Natural killer cell (primary cell): ENCODE measurements at regions of chr2 and their contacts with region 1.

Region 1: GRCh38 chr2:64644177-64645004 is 9.3 kb downstream of the SERTAD2 start:
- DNase-seq: peak; percentile 64 to 70
- ATAC-seq: peak; percentile 66 to 83 (median 68)
- H3K4me3 ChIP-seq: peak overlapping the region; percentile 23
- H3K4me3 Mint-ChIP-seq: peak overlapping the region; percentile 96
- H3K27ac ChIP-seq: peak overlapping the region; percentile 93
- H3K27ac Mint-ChIP-seq: peak overlapping the region; percentile 98 to 99
- H3K4me1 ChIP-seq: peaks cover 53% of the 10 kb centered on the region
- H3K4me1 Mint-ChIP-seq: peaks cover 59 to 67% of the 10 kb centered on the region in 2 donors
- H3K27me3 ChIP-seq: no peaks in the 10 kb centered on the region
- H3K27me3 Mint-ChIP-seq: no peaks in the 10 kb centered on the region
- CTCF ChIP-seq: no peak

Region 2: GRCh38 chr2:64609227-64609941 is 35.0 kb before region 1 on chr2:
- intact Hi-C with region 1: loop called (anchors 2 kb)
- DNase-seq: peak; percentile 80 to 86
- ATAC-seq: peak; percentile 75 to 86 (median 77)
- H3K4me3 ChIP-seq: peak overlapping the region; percentile 60
- H3K4me3 Mint-ChIP-seq: peak overlapping the region; percentile 85
- H3K27ac ChIP-seq: peak overlapping the region; percentile 69
- H3K27ac Mint-ChIP-seq: peak overlapping the region; percentile 77 to 89
- H3K4me1 ChIP-seq: peaks cover 35% of the 10 kb centered on the region
- H3K4me1 Mint-ChIP-seq: peaks cover 19 to 28% of the 10 kb centered on the region in 2 donors
- H3K27me3 ChIP-seq: no peaks in the 10 kb centered on the region
- H3K27me3 Mint-ChIP-seq: no peaks in the 10 kb centered on the region
- CTCF ChIP-seq: peak; percentile 34

Region 3: DNA sequence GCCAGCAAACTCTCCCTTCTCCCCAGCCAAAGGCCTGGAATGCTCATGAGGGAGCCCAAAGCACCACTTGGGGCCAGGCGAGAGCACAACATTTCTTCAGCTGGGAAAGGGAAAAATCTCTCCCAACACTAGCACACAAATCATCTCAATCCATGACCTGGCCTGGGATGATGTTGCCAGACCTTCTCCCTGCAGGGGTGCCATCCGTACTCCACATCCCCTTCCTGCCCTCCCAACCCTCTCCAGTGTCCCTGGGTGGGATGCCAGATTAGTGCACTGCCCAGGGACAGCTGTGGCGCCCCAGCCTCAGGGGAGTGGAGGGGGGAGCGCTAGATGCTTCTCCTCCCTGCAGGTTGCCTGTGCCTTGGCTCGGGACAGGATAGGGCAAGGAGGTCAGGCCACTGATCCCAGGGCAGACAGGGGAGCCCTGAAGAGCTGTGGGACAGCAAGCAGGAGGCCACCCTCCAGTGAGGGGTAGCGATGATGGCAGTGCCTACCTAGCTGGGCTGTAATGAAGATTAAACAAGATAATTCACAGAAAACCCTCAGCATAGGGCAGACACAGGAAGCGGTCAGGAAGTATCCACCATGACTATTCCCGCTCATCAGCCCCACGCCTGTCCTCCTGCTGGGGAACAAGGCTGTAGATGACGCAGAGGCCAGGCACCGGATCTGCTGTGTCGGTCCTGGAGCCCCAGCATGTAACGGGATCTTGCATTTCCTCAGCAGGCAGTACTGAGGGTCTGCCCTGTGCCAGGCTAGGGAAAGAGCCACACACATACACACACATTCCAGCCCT is 21.7 kb before region 1 on chr2:
- intact Hi-C with region 1: no loop called
- DNase-seq: no peak
- ATAC-seq: no peak
- H3K4me3 ChIP-seq: no peak overlapping the region
- H3K4me3 Mint-ChIP-seq: no peak overlapping the region
- H3K27ac ChIP-seq: no peak overlapping the region
- H3K27ac Mint-ChIP-seq: no peak overlapping the region
- H3K4me1 ChIP-seq: no peaks in the 10 kb centered on the region
- H3K4me1 Mint-ChIP-seq: peaks cover 0 to 9% of the 10 kb centered on the region in 2 donors
- H3K27me3 ChIP-seq: no peaks in the 10 kb centered on the region
- H3K27me3 Mint-ChIP-seq: peaks cover 0 to 5% of the 10 kb centered on the region in 2 donors
- CTCF ChIP-seq: no peak

Region 4: DNA sequence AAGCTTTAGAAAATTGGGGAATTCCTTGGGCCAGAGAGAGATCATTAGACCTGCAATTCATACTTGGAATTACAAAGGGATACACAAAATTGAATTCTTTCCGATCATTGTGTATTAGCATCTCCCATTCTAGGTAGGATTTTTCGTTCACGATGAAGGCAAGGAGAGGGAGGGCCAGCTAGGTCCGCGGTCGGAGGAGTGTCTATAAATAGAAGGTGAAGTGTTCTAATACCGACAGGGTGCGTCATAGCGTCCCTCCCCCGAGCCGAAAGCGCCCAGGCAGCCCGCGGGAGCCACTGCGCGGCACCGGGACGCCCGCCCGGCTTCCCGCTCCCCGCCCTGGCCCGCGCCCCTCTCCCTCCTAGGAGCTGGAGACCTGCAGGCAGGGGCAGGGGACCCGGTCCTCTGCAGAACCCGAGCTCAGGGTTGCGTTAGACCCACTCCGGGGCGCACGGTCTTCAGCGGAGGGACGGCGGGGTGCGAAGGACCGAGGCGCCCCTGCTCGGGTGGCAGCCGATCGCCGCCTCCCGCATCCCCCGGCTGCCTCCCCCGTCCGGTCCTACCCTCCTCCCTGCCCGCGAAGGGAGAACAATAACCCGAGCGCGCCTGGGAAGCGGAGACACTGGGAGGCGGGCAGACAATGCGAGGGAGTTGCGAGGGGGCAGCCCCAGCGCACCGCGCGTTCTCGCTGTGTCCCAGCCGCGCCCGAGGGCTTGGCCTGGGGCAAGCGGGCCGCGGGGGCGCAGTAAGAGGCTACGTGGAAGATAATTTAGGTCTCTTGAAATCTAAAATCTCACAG is 123.5 kb after region 1 on chr2:
- intact Hi-C with region 1: loop called (anchors 1 kb)
- DNase-seq: peak; percentile 77 to 87
- ATAC-seq: peak; percentile 85 to 92 (median 92)
- H3K4me3 ChIP-seq: peak overlapping the region; percentile 76
- H3K4me3 Mint-ChIP-seq: peak overlapping the region; percentile 96
- H3K27ac ChIP-seq: peak overlapping the region; percentile 95
- H3K27ac Mint-ChIP-seq: peak overlapping the region; percentile 88 to 96
- H3K4me1 ChIP-seq: peaks cover 4% of the 10 kb centered on the region
- H3K4me1 Mint-ChIP-seq: peaks cover 20 to 29% of the 10 kb centered on the region in 2 donors
- H3K27me3 ChIP-seq: no peaks in the 10 kb centered on the region
- H3K27me3 Mint-ChIP-seq: peaks cover 4 to 13% of the 10 kb centered on the region in 2 donors
- CTCF ChIP-seq: no peak

Region 5: DNA sequence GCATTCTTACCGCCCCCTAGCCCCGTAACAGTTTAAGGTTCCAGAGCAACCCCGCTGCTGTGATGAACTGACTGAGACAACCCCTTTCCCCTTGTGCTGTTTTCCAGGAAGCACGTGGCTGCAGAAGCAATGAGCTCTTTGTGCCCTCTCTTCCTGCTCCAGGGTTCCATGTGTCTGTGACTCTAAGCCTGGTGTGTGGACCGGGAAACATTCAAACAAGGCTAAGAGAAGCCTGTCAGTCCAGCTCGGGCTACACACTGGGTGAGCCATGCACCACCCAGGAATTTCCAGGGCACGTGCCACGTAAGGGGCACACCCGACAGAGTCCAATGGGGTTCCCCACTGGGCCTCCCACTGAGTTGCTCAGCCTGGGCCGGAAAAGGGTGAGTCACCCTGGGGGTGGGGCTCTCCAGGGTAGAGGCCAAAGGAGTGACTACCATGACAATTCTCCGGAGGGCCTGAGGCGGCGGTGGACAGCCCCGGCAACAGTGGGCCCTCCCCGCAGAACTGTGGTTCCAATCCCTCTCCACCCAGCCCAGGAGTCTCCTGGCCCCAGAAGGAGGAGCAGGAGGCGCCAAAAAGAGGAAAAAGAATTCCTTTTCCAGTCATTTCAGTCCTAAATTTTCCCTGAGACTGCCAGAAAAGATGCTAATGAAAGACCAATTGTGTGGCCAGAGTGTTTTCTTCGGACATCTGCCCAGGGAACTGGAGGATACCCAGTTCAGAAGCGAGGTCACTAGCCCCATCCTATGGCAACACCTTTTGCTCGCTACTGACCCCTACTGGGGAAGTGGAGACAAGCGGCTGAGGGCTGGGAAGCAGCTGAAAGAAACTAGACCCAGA is 187.0 kb after region 1 on chr2:
- intact Hi-C with region 1: loop called (anchors 1 kb)
- DNase-seq: peak; percentile 70 to 89
- ATAC-seq: peak; percentile 88 to 90 (median 90)
- H3K4me3 ChIP-seq: no peak overlapping the region
- H3K4me3 Mint-ChIP-seq: no peak overlapping the region
- H3K27ac ChIP-seq: no peak overlapping the region
- H3K27ac Mint-ChIP-seq: no peak overlapping the region
- H3K4me1 ChIP-seq: peaks cover 9% of the 10 kb centered on the region
- H3K4me1 Mint-ChIP-seq: no peaks in the 10 kb centered on the region
- H3K27me3 ChIP-seq: no peaks in the 10 kb centered on the region
- H3K27me3 Mint-ChIP-seq: peaks cover 8 to 14% of the 10 kb centered on the region in 2 donors
- CTCF ChIP-seq: peak; percentile 98

Region 6: DNA sequence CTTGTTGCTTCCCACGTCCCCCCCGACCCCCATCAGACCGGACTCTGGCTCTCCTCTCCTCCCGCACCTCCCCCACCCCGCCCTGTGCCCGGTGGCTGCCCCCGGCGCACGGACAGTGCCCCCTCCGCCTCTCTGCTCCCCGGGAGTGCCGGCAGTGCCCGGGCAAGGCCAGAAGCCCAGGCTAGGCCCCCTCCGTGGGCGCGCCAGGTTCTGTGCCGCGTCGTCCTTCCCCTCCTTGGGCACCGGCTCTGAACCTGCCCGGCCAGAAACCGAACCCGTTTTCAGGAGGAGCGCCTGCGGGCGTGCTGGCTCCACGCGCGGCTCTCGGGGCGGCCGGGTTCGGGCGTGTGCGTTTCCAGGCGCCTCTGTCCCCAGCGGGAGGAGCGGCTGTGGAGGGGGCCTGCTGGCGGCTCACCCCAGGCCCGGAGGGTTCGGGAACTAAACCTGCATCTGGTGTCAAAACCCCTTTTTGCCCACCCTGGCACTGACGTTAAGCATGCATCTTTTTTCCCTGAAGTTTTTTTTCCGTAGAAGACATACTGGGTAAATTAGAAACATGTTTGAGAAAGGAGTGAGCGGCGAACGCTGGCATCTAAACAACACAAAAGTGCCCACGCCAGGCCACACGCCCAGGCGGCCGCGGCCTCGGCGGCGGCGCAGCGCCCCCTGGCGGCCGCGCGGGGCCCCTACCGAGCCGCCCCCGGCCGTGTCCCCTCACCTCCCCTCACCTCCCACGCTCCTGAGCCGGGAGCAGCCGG is 220.9 kb after region 1 on chr2:
- intact Hi-C with region 1: loop called (anchors 1 kb)
- DNase-seq: peak; percentile 64 to 83
- ATAC-seq: peak; percentile 84 to 88 (median 88)
- H3K4me3 ChIP-seq: peak overlapping the region; percentile 53
- H3K4me3 Mint-ChIP-seq: no peak overlapping the region
- H3K27ac ChIP-seq: peak overlapping the region; percentile 50
- H3K27ac Mint-ChIP-seq: no peak overlapping the region
- H3K4me1 ChIP-seq: peaks cover 38% of the 10 kb centered on the region
- H3K4me1 Mint-ChIP-seq: no peaks in the 10 kb centered on the region
- H3K27me3 ChIP-seq: peaks cover 3% of the 10 kb centered on the region
- H3K27me3 Mint-ChIP-seq: peaks cover 4 to 9% of the 10 kb centered on the region in 2 donors
- CTCF ChIP-seq: peak; percentile 94

Region 7: GRCh38 chr2:65056215-65057053 is 412.0 kb after region 1 on chr2 and contains the start of gene CEP68:
- intact Hi-C with region 1: loop called (anchors 10 kb)
- DNase-seq: peak; percentile 59 to 95
- ATAC-seq: peak; percentile 95 to 99 (median 95)
- H3K4me3 ChIP-seq: peak within 1 kb of the TSS; percentile 71
- H3K4me3 Mint-ChIP-seq: peak within 1 kb of the TSS; percentile 97
- H3K27ac ChIP-seq: peak within 1 kb of the TSS; percentile 68
- H3K27ac Mint-ChIP-seq: peak within 1 kb of the TSS; percentile 86 to 93
- H3K4me1 ChIP-seq: peaks cover 35% of the 10 kb centered on the region
- H3K4me1 Mint-ChIP-seq: peaks cover 30 to 36% of the 10 kb centered on the region in 2 donors
- H3K27me3 ChIP-seq: no peaks in the 10 kb centered on the region
- H3K27me3 Mint-ChIP-seq: no peaks in the 10 kb centered on the region
- CTCF ChIP-seq: no peak
- total RNA-seq, gene CEP68: 5.6 to 8.3 (median 5.8) TPM

Region 8: GRCh38 chr2:65227425-65228262 is 583.3 kb after region 1 on chr2 and contains the start of gene ACTR2:
- intact Hi-C with region 1: loop called (anchors 10 kb)
- DNase-seq: peak; percentile 89 to 97
- ATAC-seq: peak; percentile 91 to 98 (median 94)
- H3K4me3 ChIP-seq: peak within 1 kb of the TSS; percentile 99
- H3K4me3 Mint-ChIP-seq: peak within 1 kb of the TSS; percentile 99
- H3K27ac ChIP-seq: peak within 1 kb of the TSS; percentile 98
- H3K27ac Mint-ChIP-seq: peak within 1 kb of the TSS; percentile 99
- H3K4me1 ChIP-seq: peaks cover 35% of the 10 kb centered on the region
- H3K4me1 Mint-ChIP-seq: peaks cover 35 to 41% of the 10 kb centered on the region in 2 donors
- H3K27me3 ChIP-seq: no peaks in the 10 kb centered on the region
- H3K27me3 Mint-ChIP-seq: no peaks in the 10 kb centered on the region
- CTCF ChIP-seq: no peak
- total RNA-seq, gene ACTR2: 346 to 404 (median 403) TPM